SK-N-SH (cell line): ENCODE measurements at regions of chr15 and their contacts with region 1.

Region 1: DNA sequence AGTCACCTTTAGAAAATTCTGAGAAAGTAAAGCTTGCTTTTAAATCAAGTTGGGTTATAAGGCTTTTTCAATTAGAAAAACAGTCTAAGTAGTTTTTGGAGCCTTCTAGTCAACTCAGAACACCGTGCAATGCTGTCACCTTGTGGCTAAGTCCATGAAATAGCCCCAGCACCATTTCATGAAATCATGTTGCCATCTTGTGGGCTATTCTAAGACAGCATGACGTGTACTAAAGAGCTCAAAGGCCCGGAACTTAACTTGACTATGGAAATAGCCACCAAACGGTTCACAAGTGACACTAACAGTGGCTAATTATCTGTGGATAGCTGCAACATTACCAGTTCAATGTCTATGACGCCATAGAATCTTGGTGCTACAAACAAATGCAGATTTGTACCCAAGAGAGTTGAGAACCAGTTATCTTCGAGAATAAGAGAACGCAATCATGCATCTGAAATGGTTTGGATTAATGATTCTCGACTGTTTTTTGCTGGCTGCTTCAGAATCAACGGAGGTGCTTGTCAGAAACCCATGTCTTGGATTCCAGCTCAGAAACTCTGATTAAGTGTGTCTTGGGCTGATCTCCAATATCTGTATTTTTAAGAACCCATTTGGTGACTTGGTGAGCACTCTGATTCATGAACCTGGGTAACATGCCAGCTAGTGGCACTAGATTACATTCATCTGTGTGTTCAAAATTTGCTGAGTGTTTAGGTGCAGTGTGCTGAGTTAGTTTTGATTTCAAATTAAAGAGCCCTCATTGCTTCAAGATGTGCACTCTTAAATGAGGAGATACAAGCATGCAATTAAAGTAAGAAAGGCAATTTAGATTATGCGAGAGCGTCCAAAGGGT is 111.2 kb upstream of the MCTP2 start:
- DNase-seq: peak; percentile 62
- H3K4me3 ChIP-seq: peak overlapping the region in 1 of 2 experiments; percentile 18; a peak in 1 of 4 replicates
- H3K27ac ChIP-seq: peak overlapping the region in 1 of 2 experiments; percentile 17; a peak in 1 of 4 replicates
- H3K4me1 ChIP-seq: peaks cover 0 to 10% of the 10 kb centered on the region in 2 experiments; a peak in 1 of 4 replicates
- H3K27me3 ChIP-seq: no peaks in the 10 kb centered on the region
- CTCF ChIP-seq: peak; percentile 100
- EP300 ChIP-seq: no peak
- RAD21 ChIP-seq: peak; percentile 100

Region 2: GRCh38 chr15:93012786-93013185 is 1107.4 kb before region 1 on chr15:
- CTCF ChIA-PET with region 1: interaction called, 15 read pairs
- POLR2A ChIA-PET with region 1: no interaction called
- DNase-seq: no peak
- H3K4me3 ChIP-seq: no peak overlapping the region
- H3K27ac ChIP-seq: no peak overlapping the region
- H3K4me1 ChIP-seq: no peaks in the 10 kb centered on the region
- H3K27me3 ChIP-seq: no peaks in the 10 kb centered on the region
- CTCF ChIP-seq: no peak
- EP300 ChIP-seq: no peak
- RAD21 ChIP-seq: no peak

Region 3: DNA sequence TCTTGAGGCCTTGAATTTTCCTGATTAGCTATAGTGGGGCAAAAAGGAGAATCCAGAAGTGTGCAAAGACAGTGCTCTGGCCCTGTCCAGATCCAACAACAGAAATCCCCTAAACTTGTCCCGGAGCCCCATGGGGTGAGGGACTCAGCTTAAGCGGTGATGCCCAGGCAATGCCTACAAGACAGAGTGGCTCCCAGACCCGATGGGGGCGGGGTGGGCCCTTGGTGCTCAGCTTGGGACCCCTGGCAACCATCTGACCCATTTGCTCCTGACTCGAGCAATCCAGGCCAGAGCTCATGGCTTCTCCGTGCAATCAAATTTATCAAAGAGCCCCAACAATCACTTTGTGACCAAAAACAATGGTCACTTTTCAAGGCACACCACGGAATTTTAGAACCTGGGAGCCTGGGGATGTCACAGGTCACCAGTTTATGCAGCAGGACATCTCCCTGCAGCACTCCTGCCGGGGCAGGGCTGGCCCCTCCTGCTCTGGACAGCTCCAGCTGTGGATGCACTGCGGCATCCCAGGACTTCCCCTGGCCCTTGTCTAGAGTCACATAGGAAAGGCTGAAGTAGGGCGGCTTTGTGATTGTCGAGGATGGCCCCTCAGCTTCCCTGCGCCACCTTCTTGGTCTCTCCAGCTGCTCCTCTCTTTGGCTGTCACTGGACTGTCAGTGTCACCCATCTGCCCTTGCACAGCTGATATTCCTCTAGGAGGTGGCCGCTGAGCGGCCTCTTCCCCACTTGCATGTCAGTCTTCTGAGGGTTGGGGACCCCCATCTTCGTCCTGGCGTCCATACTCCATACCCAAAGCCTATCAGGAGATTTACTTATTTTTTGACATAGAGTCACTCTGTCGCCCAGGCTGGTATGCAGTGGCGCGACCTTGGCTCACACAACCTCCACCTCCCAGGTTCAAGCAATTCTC is 1059.5 kb before region 1 on chr15:
- CTCF ChIA-PET with region 1: interaction called, 20 read pairs
- POLR2A ChIA-PET with region 1: no interaction called
- DNase-seq: no peak
- H3K4me3 ChIP-seq: no peak overlapping the region
- H3K27ac ChIP-seq: no peak overlapping the region
- H3K4me1 ChIP-seq: peaks cover 0 to 3% of the 10 kb centered on the region in 2 experiments; a peak in 2 of 4 replicates
- H3K27me3 ChIP-seq: no peaks in the 10 kb centered on the region
- CTCF ChIP-seq: no peak
- EP300 ChIP-seq: no peak
- RAD21 ChIP-seq: no peak

Region 4: GRCh38 chr15:93974804-93975481 is 145.2 kb before region 1 on chr15:
- CTCF ChIA-PET with region 1: interaction called, 39 read pairs
- POLR2A ChIA-PET with region 1: no interaction called
- DNase-seq: peak; percentile 16
- H3K4me3 ChIP-seq: no peak overlapping the region
- H3K27ac ChIP-seq: no peak overlapping the region
- H3K4me1 ChIP-seq: no peaks in the 10 kb centered on the region
- H3K27me3 ChIP-seq: no peaks in the 10 kb centered on the region
- CTCF ChIP-seq: peak; percentile 51
- EP300 ChIP-seq: no peak
- RAD21 ChIP-seq: peak; percentile 77

Region 5: GRCh38 chr15:94008104-94009074 is 111.8 kb before region 1 on chr15:
- CTCF ChIA-PET with region 1: interaction called, 21 read pairs
- POLR2A ChIA-PET with region 1: no interaction called
- DNase-seq: no peak
- H3K4me3 ChIP-seq: no peak overlapping the region
- H3K27ac ChIP-seq: no peak overlapping the region
- H3K4me1 ChIP-seq: 0 out of 4 replicates have a peak, but pooled peaks cover 0 to 7% of the 10 kb centered on the region in 2 experiments
- H3K27me3 ChIP-seq: no peaks in the 10 kb centered on the region
- CTCF ChIP-seq: no peak
- EP300 ChIP-seq: no peak
- RAD21 ChIP-seq: no peak

Region 6: GRCh38 chr15:94135486-94136145 is 15.5 kb after region 1 on chr15:
- CTCF ChIA-PET with region 1: interaction called, 40 read pairs
- POLR2A ChIA-PET with region 1: no interaction called
- DNase-seq: no peak
- H3K4me3 ChIP-seq: no peak overlapping the region
- H3K27ac ChIP-seq: no peak overlapping the region
- H3K4me1 ChIP-seq: no peaks in the 10 kb centered on the region
- H3K27me3 ChIP-seq: no peaks in the 10 kb centered on the region
- CTCF ChIP-seq: peak; percentile 38
- EP300 ChIP-seq: no peak
- RAD21 ChIP-seq: peak; percentile 47; the same call in 1 of the 2 replicates